ENCODE measurements at regions of chr22 and their contacts with region 1.

Region 1: DNA sequence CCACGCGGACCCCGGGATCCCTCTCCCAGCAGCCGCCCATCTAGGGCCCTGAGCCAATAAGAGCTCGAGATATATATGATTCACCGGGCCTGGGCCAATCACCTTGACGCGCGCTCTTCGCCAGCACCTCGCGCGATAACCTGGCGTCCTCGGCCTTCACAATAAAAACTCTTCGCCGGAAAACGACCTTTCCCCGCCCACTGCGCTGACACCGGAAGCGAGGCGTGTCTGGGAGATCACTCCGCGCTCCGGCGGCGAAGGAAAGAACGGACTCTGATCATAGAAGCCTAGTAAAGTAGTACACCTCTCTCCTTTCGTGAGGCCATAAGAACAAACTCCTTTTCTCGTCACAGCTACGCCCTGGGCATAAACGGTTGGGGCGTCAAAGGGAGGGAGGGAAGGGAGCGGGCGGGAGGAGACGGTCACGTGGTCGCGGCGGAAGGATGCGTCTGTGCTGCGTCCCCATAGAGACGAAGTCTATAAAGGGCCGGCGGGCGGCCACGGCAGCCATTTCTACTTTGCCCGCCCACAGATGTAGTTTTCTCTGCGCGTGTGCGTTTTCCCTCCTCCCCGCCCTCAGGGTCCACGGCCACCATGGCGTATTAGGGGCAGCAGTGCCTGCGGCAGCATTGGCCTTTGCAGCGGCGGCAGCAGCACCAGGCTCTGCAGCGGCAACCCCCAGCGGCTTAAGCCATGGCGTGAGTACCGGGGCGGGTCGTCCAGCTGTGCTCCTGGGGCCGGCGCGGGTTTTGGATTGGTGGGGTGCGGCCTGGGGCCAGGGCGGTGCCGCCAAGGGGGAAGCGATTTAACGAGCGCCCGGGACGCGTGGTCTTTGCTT is at the start of gene ATF4:
- DNase-seq: peak; percentile 88
- ATAC-seq: peak; percentile 91
- H3K4me3 Mint-ChIP-seq: peak within 1 kb of the TSS; percentile 91
- H3K27ac Mint-ChIP-seq: peak within 1 kb of the TSS; percentile 98
- H3K4me1 Mint-ChIP-seq: peaks cover 58% of the 10 kb centered on the region
- H3K27me3 Mint-ChIP-seq: peaks cover 2% of the 10 kb centered on the region
- CTCF ChIP-seq: no peak
- total RNA-seq, gene ATF4: 363 and 368 TPM in 2 replicates

Region 2: GRCh38 chr22:39152511-39153219 is 367.6 kb before region 1 on chr22 and contains the start of gene CBX7:
- CTCF ChIA-PET with region 1: no interaction called
- POLR2A ChIA-PET with region 1: interaction called, 8 read pairs
- intact Hi-C with region 1: loop called (anchors 2 kb)
- DNase-seq: peak; percentile 94
- ATAC-seq: peak; percentile 84
- H3K4me3 Mint-ChIP-seq: peak within 1 kb of the TSS; percentile 84
- H3K27ac Mint-ChIP-seq: peak within 1 kb of the TSS; percentile 76
- H3K4me1 Mint-ChIP-seq: peaks cover 46% of the 10 kb centered on the region
- H3K27me3 Mint-ChIP-seq: peaks cover 16% of the 10 kb centered on the region
- CTCF ChIP-seq: no peak
- total RNA-seq, gene CBX7: 42.6 and 45.4 TPM in 2 replicates

Region 3: DNA sequence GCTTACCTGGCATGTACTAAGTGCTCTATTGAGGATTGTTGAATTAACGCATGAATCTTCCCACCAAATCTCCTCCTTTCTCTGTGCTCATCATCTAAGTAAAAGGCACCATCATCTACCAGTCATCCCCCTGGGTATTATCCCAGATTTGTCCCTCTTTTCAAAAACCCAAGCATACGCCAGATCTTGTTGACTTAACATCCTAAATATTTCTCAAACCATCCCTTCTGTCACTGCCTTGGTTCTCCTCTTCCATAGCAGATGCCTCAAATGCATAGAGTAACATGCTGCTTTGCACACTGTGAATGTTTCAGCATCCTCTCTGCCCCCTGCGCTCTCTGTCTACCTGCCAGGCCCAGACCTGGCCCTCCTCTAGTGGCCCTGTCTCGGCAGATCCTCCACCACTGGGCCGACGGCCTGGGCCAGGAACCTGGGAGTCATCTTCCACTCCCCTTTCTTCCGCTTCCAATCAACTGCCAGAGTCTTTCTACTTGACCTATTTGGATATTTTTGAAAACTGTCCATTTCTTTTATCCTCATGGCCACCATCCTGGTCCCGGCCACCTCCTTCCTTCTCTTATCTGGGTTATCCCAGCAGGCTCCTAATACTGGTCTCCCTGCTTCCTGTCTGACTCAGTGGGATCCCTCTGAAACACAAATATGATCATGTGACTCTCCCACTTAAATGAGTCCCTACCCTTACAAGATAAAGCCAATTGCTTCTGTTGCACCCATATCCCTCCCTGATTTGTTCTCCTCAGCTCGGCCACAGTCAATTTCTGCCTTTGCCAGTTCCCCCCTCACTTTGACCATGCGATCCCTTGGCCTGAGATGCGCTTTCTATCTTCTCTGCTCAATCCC is 124.1 kb before region 1 on chr22:
- CTCF ChIA-PET with region 1: interaction called, 21 read pairs
- POLR2A ChIA-PET with region 1: interaction called, 32 read pairs
- intact Hi-C with region 1: loop called (anchors 1 kb)
- DNase-seq: no peak
- ATAC-seq: no peak
- H3K4me3 Mint-ChIP-seq: no peak overlapping the region
- H3K27ac Mint-ChIP-seq: no peak overlapping the region
- H3K4me1 Mint-ChIP-seq: peaks cover 10% of the 10 kb centered on the region
- H3K27me3 Mint-ChIP-seq: no peaks in the 10 kb centered on the region
- CTCF ChIP-seq: no peak

Region 4: DNA sequence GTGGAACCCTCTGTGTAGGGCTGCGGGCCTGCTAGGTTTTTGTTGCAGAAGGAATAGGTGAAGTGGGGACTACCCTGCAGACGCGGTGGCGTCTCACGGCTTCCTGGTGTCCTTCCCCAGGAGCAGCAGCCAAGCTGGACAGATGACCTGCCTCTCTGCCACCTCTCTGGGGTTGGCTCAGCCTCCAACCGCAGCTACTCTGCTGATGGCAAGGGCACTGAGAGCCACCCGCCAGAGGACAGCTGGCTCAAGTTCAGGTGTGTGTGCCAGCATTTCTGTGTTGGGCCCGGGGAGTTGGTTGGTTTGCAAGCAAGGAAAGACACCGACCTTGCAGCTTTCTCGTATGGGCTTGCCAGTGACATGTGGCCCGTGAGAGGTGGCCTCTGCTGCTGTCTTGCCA is 105.4 kb before region 1 on chr22:
- CTCF ChIA-PET with region 1: no interaction called
- POLR2A ChIA-PET with region 1: interaction called, 11 read pairs
- intact Hi-C with region 1: no loop called
- DNase-seq: no peak
- ATAC-seq: no peak
- H3K4me3 Mint-ChIP-seq: no peak overlapping the region
- H3K27ac Mint-ChIP-seq: no peak overlapping the region
- H3K4me1 Mint-ChIP-seq: peaks cover 23% of the 10 kb centered on the region
- H3K27me3 Mint-ChIP-seq: no peaks in the 10 kb centered on the region
- CTCF ChIP-seq: no peak

Region 5: DNA sequence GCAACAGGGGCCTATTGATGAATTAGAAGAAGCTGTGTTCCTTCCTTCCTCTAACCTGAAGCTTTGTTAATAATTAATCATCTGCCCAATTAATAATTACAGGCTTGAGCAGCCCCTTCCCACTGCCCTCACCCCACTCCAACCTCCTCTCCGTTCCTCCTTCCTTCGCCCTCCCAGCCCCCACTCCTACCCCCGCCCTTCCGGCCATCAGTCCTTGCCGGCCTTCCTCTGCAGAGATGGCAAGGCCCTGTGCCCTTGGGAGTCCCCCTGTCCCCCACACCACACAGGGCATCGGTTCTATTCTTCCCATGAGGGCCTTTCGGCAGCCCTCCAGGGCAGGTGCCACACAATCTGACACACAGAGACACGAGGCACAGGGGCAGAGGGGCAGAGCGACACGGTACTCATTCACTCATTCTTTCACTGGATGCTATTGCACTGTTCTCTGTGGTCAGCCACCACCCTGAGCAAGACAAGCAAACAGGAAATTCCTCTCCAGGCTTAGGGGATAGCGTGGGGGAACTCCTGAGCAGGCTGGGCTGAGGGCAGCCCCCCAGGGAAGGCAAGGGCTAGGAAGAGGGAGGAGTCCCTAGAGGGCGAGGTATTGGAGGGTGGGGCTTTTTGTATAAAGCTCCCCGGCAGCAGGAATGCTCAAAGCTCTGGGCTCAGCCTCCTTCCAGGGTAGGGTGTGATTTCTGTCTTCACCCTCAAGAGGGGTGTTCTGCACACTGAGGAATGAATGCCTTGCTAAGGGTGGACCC is 48.7 kb before region 1 on chr22:
- CTCF ChIA-PET with region 1: interaction called, 4 read pairs
- POLR2A ChIA-PET with region 1: interaction called, 32 read pairs
- intact Hi-C with region 1: no loop called
- DNase-seq: peak; percentile 47
- ATAC-seq: peak; percentile 79
- H3K4me3 Mint-ChIP-seq: peak overlapping the region; percentile 65
- H3K27ac Mint-ChIP-seq: peak overlapping the region; percentile 90
- H3K4me1 Mint-ChIP-seq: peaks cover 73% of the 10 kb centered on the region
- H3K27me3 Mint-ChIP-seq: no peaks in the 10 kb centered on the region
- CTCF ChIP-seq: no peak

Region 6: DNA sequence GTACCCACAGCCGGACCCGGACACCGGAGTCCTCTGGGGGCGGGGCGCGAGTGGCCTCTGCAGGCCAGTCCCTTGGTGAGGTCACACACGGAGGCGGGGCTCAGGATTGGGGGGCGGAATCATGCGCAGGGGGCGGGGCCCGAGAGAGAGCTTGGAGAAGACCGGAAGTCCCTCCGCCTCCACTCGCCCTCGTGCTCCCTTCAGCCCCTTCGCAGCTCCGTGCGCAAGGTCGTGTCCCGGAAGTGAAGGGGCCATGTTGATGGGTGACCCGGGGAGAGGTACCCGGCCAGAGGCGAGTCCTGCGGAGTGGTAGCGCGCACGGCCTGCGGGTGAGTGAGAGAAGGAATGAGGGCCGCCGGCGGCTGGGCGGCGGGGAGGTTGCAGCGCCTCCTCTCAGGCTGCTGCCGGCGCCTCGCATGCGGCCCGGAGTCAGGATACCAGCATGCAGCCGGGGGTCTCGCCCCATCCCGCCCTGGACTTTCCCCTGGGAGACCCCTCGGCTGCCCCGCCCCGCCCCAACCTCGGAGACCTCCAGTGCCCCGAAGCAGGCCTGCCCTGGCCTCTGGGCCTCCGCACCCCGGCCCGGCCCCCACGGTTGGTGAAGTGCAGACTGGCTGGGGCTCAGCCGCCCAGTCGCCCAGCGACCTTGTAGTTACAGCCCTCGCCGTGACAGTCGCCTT is 18.0 kb before region 1 on chr22 and contains the start of gene MIEF1:
- CTCF ChIA-PET with region 1: interaction called, 33 read pairs
- POLR2A ChIA-PET with region 1: interaction called, 86 read pairs
- intact Hi-C with region 1: loop called (anchors 1 kb)
- DNase-seq: peak; percentile 89
- ATAC-seq: peak; percentile 96
- H3K4me3 Mint-ChIP-seq: peak within 1 kb of the TSS; percentile 95
- H3K27ac Mint-ChIP-seq: peak within 1 kb of the TSS; percentile 89
- H3K4me1 Mint-ChIP-seq: peaks cover 34% of the 10 kb centered on the region
- H3K27me3 Mint-ChIP-seq: no peaks in the 10 kb centered on the region
- CTCF ChIP-seq: no peak
- total RNA-seq, gene MIEF1: 38.2 and 41.3 TPM in 2 replicates

Measured in activated B cell treated with CpG ODN at 0.5 μM for 24 hours (primary cell).